ENCODE measurements at regions of chr6 and their contacts with region 1.

Region 1: GRCh38 chr6:17700421-17701416 is 6.0 kb downstream of the NUP153 start:
- DNase-seq: no peak
- ATAC-seq: no peak
- H3K4me3 Mint-ChIP-seq: no peak overlapping the region
- H3K27ac Mint-ChIP-seq: peak overlapping the region; percentile 46
- H3K4me1 Mint-ChIP-seq: peaks cover 51% of the 10 kb centered on the region
- H3K27me3 Mint-ChIP-seq: no peaks in the 10 kb centered on the region

Region 2: GRCh38 chr6:17679726-17680125 is 21.0 kb before region 1 on chr6:
- CTCF ChIA-PET with region 1: interaction called, 10 read pairs
- POLR2A ChIA-PET with region 1: interaction called, 3 read pairs
- DNase-seq: no peak
- ATAC-seq: no peak
- H3K4me3 Mint-ChIP-seq: no peak overlapping the region
- H3K27ac Mint-ChIP-seq: no peak overlapping the region
- H3K4me1 Mint-ChIP-seq: peaks cover 50% of the 10 kb centered on the region
- H3K27me3 Mint-ChIP-seq: no peaks in the 10 kb centered on the region